Activated naive CD4-positive, alpha-beta T cell treated with anti-CD3 and anti-CD28 coated beads, Interleukin-2, amount 10 ng/mL, durations not matched to agents 7 days and 5 days (primary cell): ENCODE measurements at regions of chr3 and their contacts with region 1.

Region 1: GRCh38 chr3:138935848-138936740 is 10.8 kb downstream of the FOXL2 start:
- DNase-seq: peak; percentile 73
- H3K4me3 Mint-ChIP-seq: peak overlapping the region; percentile 54
- H3K27ac Mint-ChIP-seq: peak overlapping the region; percentile 64
- H3K4me1 Mint-ChIP-seq: peaks cover 30% of the 10 kb centered on the region
- H3K27me3 Mint-ChIP-seq: peaks cover 93% of the 10 kb centered on the region

Region 2: DNA sequence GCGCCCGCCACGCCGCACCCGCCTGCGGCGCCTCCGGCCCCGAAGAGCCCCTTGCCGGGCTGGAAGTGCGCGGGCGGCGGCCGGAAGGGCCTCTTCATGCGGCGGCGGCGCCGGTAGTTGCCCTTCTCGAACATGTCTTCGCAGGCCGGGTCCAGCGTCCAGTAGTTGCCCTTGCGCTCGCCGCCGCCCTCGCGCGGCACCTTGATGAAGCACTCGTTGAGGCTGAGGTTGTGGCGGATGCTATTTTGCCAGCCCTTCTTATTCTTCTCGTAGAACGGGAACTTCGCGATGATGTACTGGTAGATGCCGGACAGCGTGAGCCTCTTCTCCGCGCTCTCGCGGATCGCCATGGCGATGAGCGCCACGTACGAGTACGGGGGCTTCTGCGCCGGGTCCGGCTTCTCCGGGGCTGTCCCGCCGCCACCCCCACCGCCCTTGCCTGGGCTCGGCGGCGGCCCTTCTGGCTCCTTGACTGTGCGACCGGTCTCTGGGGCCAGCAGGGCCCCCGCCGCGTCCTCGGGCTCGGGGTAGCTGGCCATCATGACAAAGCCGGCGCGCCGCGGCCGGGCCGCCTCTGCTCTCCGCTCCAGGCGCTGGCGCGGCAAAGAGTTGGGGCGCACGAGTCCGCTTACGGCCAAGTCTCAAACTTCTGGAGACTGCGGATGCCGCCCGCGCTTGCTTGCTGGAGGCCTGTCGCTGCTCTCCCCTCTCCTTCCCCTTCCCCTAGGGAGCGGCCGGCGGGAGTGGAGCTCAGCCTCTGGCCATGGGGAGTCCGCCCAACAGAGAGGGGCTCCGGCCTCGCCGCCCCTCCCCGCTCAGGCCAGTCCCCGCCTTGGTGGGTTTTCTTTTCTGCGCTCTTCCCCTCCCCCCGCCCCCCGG is 10.3 kb after region 1 on chr3:
- CTCF ChIA-PET with region 1: interaction called, 21 read pairs
- DNase-seq: peak; percentile 43
- H3K4me3 Mint-ChIP-seq: peak overlapping the region; percentile 35
- H3K27ac Mint-ChIP-seq: no peak overlapping the region
- H3K4me1 Mint-ChIP-seq: peaks cover 50% of the 10 kb centered on the region
- H3K27me3 Mint-ChIP-seq: peaks cover 100% of the 10 kb centered on the region

Region 3: GRCh38 chr3:138974462-138974861 is 38.4 kb after region 1 on chr3:
- CTCF ChIA-PET with region 1: interaction called, 11 read pairs
- DNase-seq: no peak
- H3K4me3 Mint-ChIP-seq: no peak overlapping the region
- H3K27ac Mint-ChIP-seq: no peak overlapping the region
- H3K4me1 Mint-ChIP-seq: no peaks in the 10 kb centered on the region
- H3K27me3 Mint-ChIP-seq: peaks cover 19% of the 10 kb centered on the region

Region 4: GRCh38 chr3:139329345-139329850 is 393.3 kb after region 1 on chr3:
- CTCF ChIA-PET with region 1: interaction called, 14 read pairs
- DNase-seq: peak; percentile 91
- H3K4me3 Mint-ChIP-seq: peak overlapping the region; percentile 55
- H3K27ac Mint-ChIP-seq: no peak overlapping the region
- H3K4me1 Mint-ChIP-seq: peaks cover 18% of the 10 kb centered on the region
- H3K27me3 Mint-ChIP-seq: peaks cover 20% of the 10 kb centered on the region